HCT116 (cell line): ENCODE measurements at regions of chr14 and their contacts with region 1.

Region 1: GRCh38 chr14:50954811-50955372 is 10.6 kb upstream of the PYGL start:
- DNase-seq: peak; percentile 23
- ATAC-seq: peak; percentile 52
- H3K4me3 ChIP-seq: peak overlapping the region in 1 of 2 experiments; percentile 23; a peak in 1 of 4 replicates
- H3K27ac ChIP-seq: peak overlapping the region; percentile 69
- H3K4me1 ChIP-seq: peaks cover 11 to 18% of the 10 kb centered on the region in 2 experiments
- H3K27me3 ChIP-seq: no peaks in the 10 kb centered on the region
- CTCF ChIP-seq: peak; percentile 56 to 69 (median 68)
- POLR2A ChIP-seq: no peak
- RAD21 ChIP-seq: peak; percentile 71

Region 2: DNA sequence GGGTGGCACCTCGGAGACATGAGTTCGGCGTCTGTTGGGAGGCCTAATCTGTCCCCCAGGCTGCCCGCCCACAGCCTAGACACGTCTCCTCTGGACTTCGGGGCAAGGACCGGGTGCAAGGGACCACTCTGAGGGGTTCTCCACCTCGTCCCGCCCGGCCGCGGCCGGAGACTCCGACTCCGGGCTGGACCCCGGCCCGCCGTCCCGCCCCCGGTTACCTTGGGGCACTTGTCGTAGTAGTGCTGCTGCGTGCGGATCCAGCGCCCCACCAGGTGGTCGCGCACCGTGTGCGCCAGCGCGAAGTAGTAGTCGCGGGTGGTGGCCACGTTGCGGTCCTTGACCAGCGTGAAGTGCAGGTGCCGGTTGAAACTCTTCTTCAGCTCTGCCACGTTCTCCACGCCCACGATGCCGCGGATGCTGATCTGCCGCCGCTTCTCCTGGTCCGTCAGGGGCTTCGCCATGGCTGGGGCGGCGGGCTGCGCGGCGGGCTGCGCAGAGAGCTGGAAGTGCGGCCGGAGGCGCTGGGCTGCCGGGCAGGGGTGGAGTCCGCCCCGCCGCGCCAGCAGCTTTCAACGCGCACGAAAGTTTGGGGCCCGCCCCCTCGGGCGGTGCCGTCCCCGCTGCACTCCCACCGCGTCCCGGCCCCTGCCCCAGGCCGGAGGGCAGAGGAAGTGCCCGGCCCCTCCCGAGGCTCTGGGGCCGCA is 10.8 kb before region 1 on chr14 and contains the start of gene PYGL:
- CTCF ChIA-PET with region 1: interaction called, 10 read pairs
- POLR2A ChIA-PET with region 1: interaction called, 11 read pairs
- RAD21 ChIA-PET with region 1: interaction called in 1 of 2 experiments, 3 read pairs
- intact Hi-C with region 1: no loop called
- DNase-seq: peak; percentile 43
- ATAC-seq: peak; percentile 85
- H3K4me3 ChIP-seq: peak within 1 kb of the TSS; percentile 77 to 95
- H3K27ac ChIP-seq: peak within 1 kb of the TSS; percentile 95
- H3K4me1 ChIP-seq: peaks cover 3 to 12% of the 10 kb centered on the region in 2 experiments; a peak in 3 of 4 replicates
- H3K27me3 ChIP-seq: no peaks in the 10 kb centered on the region
- CTCF ChIP-seq: no peak
- POLR2A ChIP-seq: peak; percentile 91
- RAD21 ChIP-seq: no peak
- total RNA-seq, gene PYGL: 173 TPM

Region 3: GRCh38 chr14:51087031-51087441 is 132.1 kb after region 1 on chr14:
- CTCF ChIA-PET with region 1: no interaction called
- POLR2A ChIA-PET with region 1: no interaction called
- RAD21 ChIA-PET with region 1: no interaction called
- intact Hi-C with region 1: loop called (anchors 10 kb)
- DNase-seq: peak; percentile 72
- ATAC-seq: peak; percentile 100
- H3K4me3 ChIP-seq: no peak overlapping the region
- H3K27ac ChIP-seq: no peak overlapping the region
- H3K4me1 ChIP-seq: peaks cover 8 to 15% of the 10 kb centered on the region in 2 experiments
- H3K27me3 ChIP-seq: no peaks in the 10 kb centered on the region
- CTCF ChIP-seq: no peak
- POLR2A ChIP-seq: no peak
- RAD21 ChIP-seq: no peak

Region 4: DNA sequence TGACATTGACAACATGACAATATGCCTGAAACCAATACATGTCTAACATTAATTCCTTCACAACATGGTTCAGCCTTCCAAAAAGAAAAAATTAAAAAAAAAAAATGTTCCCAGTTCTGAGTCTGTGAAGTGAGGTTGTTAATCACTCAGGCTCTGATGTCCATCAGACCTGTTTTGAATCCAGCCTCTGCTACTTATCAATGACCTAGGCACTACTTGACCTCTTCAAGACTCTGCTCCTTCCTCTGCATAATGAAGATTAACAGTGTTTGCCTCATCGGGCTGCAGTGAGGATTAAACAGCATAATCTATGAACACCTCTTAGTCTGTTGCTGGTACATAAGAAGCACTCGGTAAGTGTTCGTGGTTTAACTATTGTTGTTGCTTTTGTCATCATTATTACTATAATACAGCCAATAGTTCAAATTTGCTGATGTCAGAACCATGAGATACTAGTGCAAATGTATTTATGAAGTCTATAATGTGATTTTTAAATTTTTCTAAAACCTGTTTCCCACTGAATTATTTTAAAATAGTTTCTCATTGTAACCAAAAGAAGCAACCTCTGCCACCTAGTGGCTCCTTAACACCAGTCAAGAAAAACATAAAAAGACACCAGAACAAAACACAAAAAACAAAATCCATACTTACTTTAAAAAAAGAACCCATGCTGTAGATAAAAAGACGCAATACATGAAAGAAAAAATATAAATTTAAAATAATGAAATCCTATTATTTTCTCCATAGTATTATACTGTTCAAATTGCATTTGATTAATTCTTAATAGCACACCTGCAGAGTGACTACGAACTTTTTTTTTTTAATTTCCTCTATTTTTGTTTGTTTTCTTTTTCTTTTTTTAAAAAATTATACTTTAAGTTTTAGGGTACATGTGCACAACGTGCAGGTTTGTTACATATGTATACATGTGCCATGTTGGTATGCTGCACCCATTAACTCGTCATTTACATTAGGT is 264.9 kb after region 1 on chr14:
- CTCF ChIA-PET with region 1: interaction called, 7 read pairs
- POLR2A ChIA-PET with region 1: interaction called, 3 read pairs
- RAD21 ChIA-PET with region 1: interaction called in 1 of 2 experiments, 3 read pairs
- intact Hi-C with region 1: loop called (anchors 1 kb)
- DNase-seq: no peak
- ATAC-seq: no peak
- H3K4me3 ChIP-seq: no peak overlapping the region
- H3K27ac ChIP-seq: no peak overlapping the region
- H3K4me1 ChIP-seq: peaks cover 0 to 3% of the 10 kb centered on the region in 2 experiments; a peak in 1 of 4 replicates
- H3K27me3 ChIP-seq: no peaks in the 10 kb centered on the region
- CTCF ChIP-seq: peak; percentile 58 to 68 (median 64); a peak in 5 of 6 replicates
- POLR2A ChIP-seq: no peak
- RAD21 ChIP-seq: peak; percentile 69